SK-N-SH (cell line): ENCODE measurements at regions of chr3 and their contacts with region 1.

Region 1: DNA sequence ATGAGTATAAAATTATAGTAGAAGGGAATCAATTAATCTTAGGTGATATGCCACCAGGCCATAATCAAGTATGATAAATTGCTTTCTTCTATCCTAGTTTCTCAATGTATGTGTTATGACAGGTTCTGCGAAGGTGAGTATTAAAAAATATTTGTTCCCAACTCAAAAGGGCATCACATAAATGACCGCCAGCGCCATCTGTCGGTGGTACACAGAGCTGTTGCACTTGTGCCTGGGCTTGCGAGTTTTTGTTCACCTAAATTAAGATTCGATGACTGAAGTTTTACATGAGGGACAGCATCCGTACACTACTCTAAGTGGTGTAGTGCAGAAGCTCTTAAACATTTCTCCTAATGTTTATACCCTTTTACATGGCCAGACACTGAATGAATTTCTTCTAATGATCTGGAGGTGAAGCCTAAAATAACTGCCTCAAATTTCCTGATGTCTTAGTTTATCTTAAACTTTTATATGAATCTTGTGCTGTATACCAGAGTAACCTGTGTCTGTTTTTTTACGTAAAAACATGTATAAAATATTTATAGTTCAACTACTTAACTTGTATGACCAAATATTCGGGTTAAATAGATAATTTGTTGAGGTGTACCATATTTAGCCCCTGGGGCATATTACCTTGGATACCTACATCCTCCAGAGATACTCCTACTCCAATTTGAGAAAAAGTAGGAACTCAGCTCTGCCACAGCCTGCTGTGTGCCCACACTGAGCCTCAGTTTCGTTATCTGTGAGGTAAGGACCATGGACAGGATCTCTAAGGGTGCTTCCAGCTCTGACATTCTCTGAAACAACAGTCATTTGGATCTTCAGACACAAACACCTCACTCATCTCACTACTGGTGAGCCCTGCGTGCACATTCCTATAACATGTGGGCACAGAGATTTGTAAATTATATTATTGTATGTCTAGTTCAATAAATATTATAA is 365.6 kb downstream of the MAGI1 start:
- DNase-seq: peak; percentile 36
- H3K4me3 ChIP-seq: no peak overlapping the region; a peak in 1 of 4 replicates
- H3K27ac ChIP-seq: no peak overlapping the region
- H3K4me1 ChIP-seq: peaks cover 0 to 5% of the 10 kb centered on the region in 2 experiments; a peak in 1 of 4 replicates
- H3K27me3 ChIP-seq: no peaks in the 10 kb centered on the region
- CTCF ChIP-seq: peak; percentile 87
- EP300 ChIP-seq: no peak
- RAD21 ChIP-seq: peak; percentile 84

Region 2: DNA sequence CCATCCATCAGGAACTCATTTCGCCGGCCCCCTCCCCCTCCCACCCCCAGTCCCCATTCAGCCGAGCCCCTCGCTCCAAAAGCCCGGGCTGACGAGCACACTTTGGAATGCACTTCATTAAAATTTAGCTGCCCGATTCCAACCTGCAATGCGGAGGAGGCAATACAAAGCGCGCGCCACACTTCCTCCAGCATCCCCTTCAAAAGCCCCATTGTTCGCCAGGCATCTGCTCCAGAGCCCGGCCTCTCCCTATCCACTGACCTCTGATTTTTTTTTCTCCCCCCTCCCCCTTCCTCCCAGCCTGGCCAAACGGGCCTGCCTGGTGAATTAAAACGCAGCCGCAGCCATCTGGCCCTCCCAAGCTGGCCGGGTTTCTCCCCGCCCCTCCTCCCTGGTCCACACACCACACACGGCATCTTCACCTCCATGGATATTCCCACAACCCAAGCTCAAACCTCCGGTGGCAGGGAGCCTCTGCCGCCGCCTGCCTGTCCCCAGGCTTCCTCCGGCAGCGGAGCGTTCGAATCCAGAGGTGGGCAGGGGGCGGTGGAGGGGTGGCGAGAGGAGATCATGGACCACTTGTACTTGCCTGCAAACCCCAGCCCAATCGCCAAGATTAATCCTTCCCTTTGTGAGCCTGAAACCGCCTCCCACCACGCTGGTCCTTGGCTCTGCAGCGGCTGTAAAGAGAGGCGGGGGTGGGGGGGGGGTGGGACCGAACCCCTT is 75.8 kb before region 1 on chr3:
- CTCF ChIA-PET with region 1: interaction called, 32 read pairs
- POLR2A ChIA-PET with region 1: interaction called, 3 read pairs
- DNase-seq: peak; percentile 87
- H3K4me3 ChIP-seq: peak overlapping the region; percentile 55 to 58
- H3K27ac ChIP-seq: peak overlapping the region in 1 of 2 experiments; percentile 94; a peak in 2 of 4 replicates
- H3K4me1 ChIP-seq: peaks cover 0 to 17% of the 10 kb centered on the region in 2 experiments; a peak in 2 of 4 replicates
- H3K27me3 ChIP-seq: no peaks in the 10 kb centered on the region
- CTCF ChIP-seq: no peak
- EP300 ChIP-seq: peak in 1 of 2 experiments; percentile 42; a peak in 2 of 4 replicates
- RAD21 ChIP-seq: peak; percentile 27; the same call in 1 of the 2 replicates

Region 3: DNA sequence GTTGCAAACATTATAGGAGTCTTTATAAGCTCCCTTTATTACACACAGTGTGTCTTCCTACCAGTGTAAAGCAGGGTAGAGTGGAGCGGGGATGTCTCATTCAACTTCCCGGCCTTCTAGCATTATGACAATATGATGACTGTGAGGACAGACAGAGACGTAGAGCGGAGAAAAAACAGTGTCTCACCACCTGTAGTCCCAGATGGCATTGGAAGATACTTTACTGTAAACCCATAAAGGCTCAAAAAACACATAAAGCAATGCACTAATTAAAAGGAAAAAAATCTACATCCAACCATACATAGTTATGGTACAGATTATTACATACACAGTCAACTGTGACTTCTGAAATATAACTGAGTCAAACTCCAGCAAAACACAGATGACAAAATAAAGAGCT is 18.1 kb before region 1 on chr3:
- CTCF ChIA-PET with region 1: interaction called, 19 read pairs
- POLR2A ChIA-PET with region 1: no interaction called
- DNase-seq: no peak
- H3K4me3 ChIP-seq: no peak overlapping the region
- H3K27ac ChIP-seq: no peak overlapping the region
- H3K4me1 ChIP-seq: no peaks in the 10 kb centered on the region
- H3K27me3 ChIP-seq: no peaks in the 10 kb centered on the region
- CTCF ChIP-seq: no peak
- EP300 ChIP-seq: no peak
- RAD21 ChIP-seq: no peak

Region 4: GRCh38 chr3:65685621-65686235 is 12.6 kb after region 1 on chr3:
- CTCF ChIA-PET with region 1: interaction called, 29 read pairs
- POLR2A ChIA-PET with region 1: no interaction called
- DNase-seq: no peak
- H3K4me3 ChIP-seq: no peak overlapping the region
- H3K27ac ChIP-seq: no peak overlapping the region
- H3K4me1 ChIP-seq: peaks cover 2 to 9% of the 10 kb centered on the region in 2 experiments; a peak in 2 of 4 replicates
- H3K27me3 ChIP-seq: no peaks in the 10 kb centered on the region
- CTCF ChIP-seq: no peak
- EP300 ChIP-seq: no peak
- RAD21 ChIP-seq: no peak

Region 5: GRCh38 chr3:65702202-65702601 is 29.1 kb after region 1 on chr3:
- CTCF ChIA-PET with region 1: interaction called, 12 read pairs
- POLR2A ChIA-PET with region 1: no interaction called
- DNase-seq: no peak
- H3K4me3 ChIP-seq: no peak overlapping the region
- H3K27ac ChIP-seq: no peak overlapping the region
- H3K4me1 ChIP-seq: no peaks in the 10 kb centered on the region
- H3K27me3 ChIP-seq: no peaks in the 10 kb centered on the region
- CTCF ChIP-seq: no peak
- EP300 ChIP-seq: no peak
- RAD21 ChIP-seq: no peak

Region 6: GRCh38 chr3:65732051-65732935 is 59.1 kb after region 1 on chr3:
- CTCF ChIA-PET with region 1: interaction called, 25 read pairs
- POLR2A ChIA-PET with region 1: no interaction called
- DNase-seq: peak; percentile 71
- H3K4me3 ChIP-seq: peak overlapping the region in 1 of 2 experiments; percentile 37; a peak in 1 of 4 replicates
- H3K27ac ChIP-seq: peak overlapping the region in 1 of 2 experiments; percentile 41; a peak in 1 of 4 replicates
- H3K4me1 ChIP-seq: peaks cover 11% of the 10 kb centered on the region in 2 experiments
- H3K27me3 ChIP-seq: no peaks in the 10 kb centered on the region
- CTCF ChIP-seq: peak; percentile 85
- EP300 ChIP-seq: no peak
- RAD21 ChIP-seq: peak; percentile 88